MCF 10A (cell line): ENCODE measurements at regions of chr2 and their contacts with region 1.

Region 1: GRCh38 chr2:26088032-26088643 is 54.3 kb downstream of the RAB10 start:
- DNase-seq: peak; percentile 39
- H3K4me3 Mint-ChIP-seq: no peak overlapping the region
- H3K27ac Mint-ChIP-seq: no peak overlapping the region
- H3K4me1 Mint-ChIP-seq: peaks cover 45% of the 10 kb centered on the region
- H3K27me3 Mint-ChIP-seq: no peaks in the 10 kb centered on the region
- CTCF ChIP-seq: peak; percentile 45

Region 2: GRCh38 chr2:26144953-26145680 is 57.0 kb after region 1 on chr2:
- CTCF ChIA-PET with region 1: no interaction called
- POLR2A ChIA-PET with region 1: no interaction called
- intact Hi-C with region 1: loop called (anchors 1 kb)
- DNase-seq: peak; percentile 74
- H3K4me3 Mint-ChIP-seq: no peak overlapping the region
- H3K27ac Mint-ChIP-seq: peak overlapping the region; percentile 72
- H3K4me1 Mint-ChIP-seq: peaks cover 6% of the 10 kb centered on the region
- H3K27me3 Mint-ChIP-seq: peaks cover 6% of the 10 kb centered on the region
- CTCF ChIP-seq: peak; percentile 84